A673 (cell line): ENCODE measurements at regions of chr9 and their contacts with region 1.

Region 1: GRCh38 chr9:129139993-129140396 is 28.8 kb downstream of the PTPA start:
- DNase-seq: peak; percentile 100
- H3K4me3 ChIP-seq: peak overlapping the region; percentile 41
- H3K27ac ChIP-seq: peak overlapping the region; percentile 100
- H3K4me1 ChIP-seq: peaks cover 49% of the 10 kb centered on the region
- H3K27me3 ChIP-seq: no peaks in the 10 kb centered on the region
- CTCF ChIP-seq: no peak

Region 2: DNA sequence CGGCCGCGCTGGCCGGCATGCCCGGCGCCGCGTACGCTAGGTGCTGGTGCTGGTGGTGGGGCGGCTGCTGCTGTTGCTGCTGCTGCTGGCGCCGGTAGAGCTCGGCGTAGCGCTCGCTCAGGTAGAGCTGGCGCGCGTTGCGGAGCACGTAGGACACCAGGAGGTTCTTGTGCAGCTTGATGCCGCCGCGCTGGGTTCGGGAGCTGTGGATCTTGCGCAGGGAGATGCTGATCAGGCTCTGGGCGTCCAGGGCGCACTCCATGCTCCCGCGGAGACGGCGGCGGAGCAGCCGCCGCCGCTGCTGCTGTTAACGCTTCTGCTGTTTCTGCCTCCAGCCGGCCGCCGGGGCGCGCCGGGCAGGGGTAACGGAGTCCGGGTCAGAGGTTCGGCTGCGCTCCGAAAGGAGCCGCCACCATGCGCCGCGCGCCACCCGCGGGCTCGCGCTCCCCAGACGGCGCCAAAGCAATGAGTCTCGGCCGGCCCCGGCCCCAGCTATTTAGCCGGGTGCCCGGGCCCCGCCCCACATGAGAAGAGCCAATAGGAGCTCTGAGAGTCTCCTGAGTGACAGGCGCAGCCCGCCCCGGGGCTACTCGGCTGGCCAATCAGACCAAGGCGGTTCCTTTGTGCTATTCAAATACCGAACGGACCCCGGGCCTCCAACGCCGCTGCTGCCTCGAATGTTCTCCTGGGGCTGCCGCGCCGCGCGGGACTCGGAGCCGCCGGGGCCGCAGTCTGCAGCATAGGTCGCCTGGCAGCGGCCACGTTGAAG is 38.0 kb after region 1 on chr9 and contains the start of gene IER5L:
- CTCF ChIA-PET with region 1: interaction called, 7 read pairs
- POLR2A ChIA-PET with region 1: no interaction called
- intact Hi-C with region 1: loop called (anchors 2 kb)
- DNase-seq: peak; percentile 97
- H3K4me3 ChIP-seq: peak within 1 kb of the TSS; percentile 66
- H3K27ac ChIP-seq: peak within 1 kb of the TSS; percentile 93
- H3K4me1 ChIP-seq: peaks cover 24% of the 10 kb centered on the region
- H3K27me3 ChIP-seq: no peaks in the 10 kb centered on the region
- CTCF ChIP-seq: no peak
- total RNA-seq, gene IER5L: 12.1 and 14.0 TPM in 2 replicates

Region 3: GRCh38 chr9:129307227-129307970 is 167.4 kb after region 1 on chr9:
- CTCF ChIA-PET with region 1: no interaction called
- POLR2A ChIA-PET with region 1: no interaction called
- intact Hi-C with region 1: no loop called
- DNase-seq: no peak
- H3K4me3 ChIP-seq: no peak overlapping the region
- H3K27ac ChIP-seq: no peak overlapping the region
- H3K4me1 ChIP-seq: no peaks in the 10 kb centered on the region
- H3K27me3 ChIP-seq: no peaks in the 10 kb centered on the region
- CTCF ChIP-seq: no peak

Region 4: DNA sequence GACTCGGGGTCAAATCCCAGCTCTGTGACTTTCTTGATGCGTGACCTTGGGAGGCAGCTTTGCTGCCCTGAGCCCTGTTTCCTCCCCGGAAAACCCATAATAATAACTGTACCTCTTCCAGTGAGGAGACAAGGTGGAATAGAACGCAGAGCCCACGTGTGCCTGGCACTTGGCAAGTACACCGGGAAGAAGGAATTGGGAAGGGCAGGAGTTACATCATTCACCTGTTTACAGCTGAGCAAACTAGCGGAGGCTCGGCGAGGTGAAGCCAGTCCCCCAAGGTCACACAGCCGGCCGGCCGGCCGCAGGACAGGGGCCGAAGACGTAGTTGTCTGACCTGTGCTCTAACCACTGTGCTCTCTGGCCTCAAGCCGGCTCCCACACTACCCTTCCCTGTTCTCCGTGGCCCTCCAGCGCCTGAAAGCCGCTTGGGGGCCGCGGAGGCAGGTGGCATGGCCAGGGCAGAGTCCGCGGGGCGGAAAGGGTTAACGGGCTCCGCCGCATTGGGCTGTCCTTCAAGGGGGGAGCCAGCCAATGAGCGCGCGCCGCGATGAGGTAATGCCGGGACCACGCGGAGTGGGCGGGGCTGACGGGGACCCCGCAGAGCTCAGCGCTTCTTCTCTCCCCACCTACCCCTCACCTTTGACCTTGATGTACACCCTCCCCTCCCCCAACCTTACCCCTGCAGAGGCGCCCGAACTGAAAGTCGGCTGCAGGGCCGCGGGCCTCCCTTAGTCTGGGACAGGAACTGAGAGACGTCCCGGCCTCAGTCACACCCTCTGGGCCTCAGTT is 355.7 kb after region 1 on chr9:
- CTCF ChIA-PET with region 1: no interaction called
- POLR2A ChIA-PET with region 1: no interaction called
- intact Hi-C with region 1: loop called (anchors 5 kb)
- DNase-seq: peak; percentile 95
- H3K4me3 ChIP-seq: peak overlapping the region; percentile 58
- H3K27ac ChIP-seq: peak overlapping the region; percentile 96
- H3K4me1 ChIP-seq: peaks cover 65% of the 10 kb centered on the region
- H3K27me3 ChIP-seq: no peaks in the 10 kb centered on the region
- CTCF ChIP-seq: no peak

Region 5: DNA sequence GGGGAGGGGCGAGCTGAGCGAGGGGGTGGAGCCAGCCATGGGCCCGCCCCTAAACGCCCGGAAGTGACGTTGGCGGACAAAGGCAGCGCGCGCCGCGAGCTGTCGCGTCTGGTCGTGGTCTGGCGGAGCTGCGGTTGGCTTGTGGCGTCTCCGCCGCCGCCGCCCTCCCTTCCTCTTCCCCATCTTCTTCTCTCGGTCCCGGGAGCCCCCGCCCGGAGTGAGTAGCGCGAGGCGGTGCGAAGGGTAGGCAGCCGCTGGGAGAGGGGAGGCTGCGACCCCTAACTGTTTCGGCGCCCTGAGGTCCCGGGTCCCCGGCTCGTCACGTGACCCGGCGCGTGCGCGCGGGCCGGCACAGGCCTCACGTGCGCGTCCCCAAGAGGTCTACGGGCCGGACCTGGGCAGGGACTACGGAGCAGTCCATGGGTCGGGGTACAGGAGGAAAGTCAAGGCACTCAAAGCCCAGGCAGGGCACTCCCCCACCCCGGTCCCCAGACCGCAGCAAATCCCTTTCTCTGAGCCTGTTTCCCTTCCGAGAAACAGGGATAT is 486.2 kb after region 1 on chr9 and contains the start of gene NTMT1:
- CTCF ChIA-PET with region 1: interaction called, 40 read pairs
- POLR2A ChIA-PET with region 1: no interaction called
- intact Hi-C with region 1: no loop called
- DNase-seq: peak; percentile 88
- H3K4me3 ChIP-seq: peak within 1 kb of the TSS; percentile 97
- H3K27ac ChIP-seq: peak within 1 kb of the TSS; percentile 98
- H3K4me1 ChIP-seq: peaks cover 39% of the 10 kb centered on the region
- H3K27me3 ChIP-seq: no peaks in the 10 kb centered on the region
- CTCF ChIP-seq: no peak
- total RNA-seq, gene NTMT1: 82.8 and 87.1 TPM in 2 replicates

Region 6: GRCh38 chr9:129783516-129784361 is 643.7 kb after region 1 on chr9:
- CTCF ChIA-PET with region 1: no interaction called
- POLR2A ChIA-PET with region 1: no interaction called
- intact Hi-C with region 1: loop called (anchors 5 kb)
- DNase-seq: peak; percentile 87
- H3K4me3 ChIP-seq: no peak overlapping the region
- H3K27ac ChIP-seq: no peak overlapping the region
- H3K4me1 ChIP-seq: no peaks in the 10 kb centered on the region
- H3K27me3 ChIP-seq: peaks cover 8% of the 10 kb centered on the region
- CTCF ChIP-seq: peak; percentile 93